Esophagus muscularis mucosa (tissue), 4 donors: ENCODE measurements at regions of chr3 and their contacts with region 1.

Region 1: GRCh38 chr3:15562560-15562959 is 38.8 kb downstream of the HACL1 start:
- DNase-seq: no peak
- H3K4me3 ChIP-seq: no peak overlapping the region
- H3K27ac ChIP-seq: no peak overlapping the region
- H3K4me1 ChIP-seq: peaks cover 0 to 3% (median 0%) of the 10 kb centered on the region in 4 donors
- H3K27me3 ChIP-seq: no peaks in the 10 kb centered on the region
- CTCF ChIP-seq: no peak
- EP300 ChIP-seq: no peak
- POLR2A ChIP-seq: no peak

Region 2: GRCh38 chr3:15241341-15241740 is 321.2 kb before region 1 on chr3:
- intact Hi-C with region 1: loop called (anchors 10 kb)
- DNase-seq: no peak
- H3K4me3 ChIP-seq: no peak overlapping the region
- H3K27ac ChIP-seq: no peak overlapping the region
- H3K4me1 ChIP-seq: no peaks in the 10 kb centered on the region
- H3K27me3 ChIP-seq: no peaks in the 10 kb centered on the region
- CTCF ChIP-seq: peak in 2 of 3 experiments; percentile 11 to 14
- EP300 ChIP-seq: no peak
- POLR2A ChIP-seq: no peak

Region 3: DNA sequence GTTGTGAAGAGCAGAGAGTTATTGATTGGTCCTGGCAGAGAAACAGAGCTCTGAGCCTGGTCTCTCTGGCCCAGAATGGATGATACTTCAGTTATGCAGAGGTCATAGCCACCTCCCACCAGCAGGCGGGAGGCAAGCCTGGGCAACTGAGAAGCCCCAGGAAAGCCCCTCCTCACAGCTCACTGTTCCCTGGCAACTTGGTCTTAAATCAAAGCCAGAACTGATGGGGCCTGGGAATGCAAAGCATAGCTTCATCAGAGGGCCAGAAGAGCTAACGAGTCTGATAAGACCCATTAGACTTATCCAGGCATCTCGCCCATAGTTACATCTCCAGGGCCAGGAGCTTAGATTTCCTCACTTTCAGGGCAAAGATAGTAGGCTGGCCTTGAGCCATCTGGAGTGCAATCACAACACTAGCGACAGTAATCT is 35.5 kb before region 1 on chr3:
- intact Hi-C with region 1: no loop called
- DNase-seq: no peak
- H3K4me3 ChIP-seq: no peak overlapping the region
- H3K27ac ChIP-seq: no peak overlapping the region
- H3K4me1 ChIP-seq: peaks cover 0 to 1% (median under 1%) of the 10 kb centered on the region in 4 donors
- H3K27me3 ChIP-seq: no peaks in the 10 kb centered on the region
- CTCF ChIP-seq: no peak
- EP300 ChIP-seq: no peak
- POLR2A ChIP-seq: no peak

Region 4: GRCh38 chr3:15602146-15602536 is 39.6 kb after region 1 on chr3:
- intact Hi-C with region 1: no loop called
- DNase-seq: no peak
- H3K4me3 ChIP-seq: peak overlapping the region; percentile 78 to 95 (median 78)
- H3K27ac ChIP-seq: peak overlapping the region; percentile 87 to 92 (median 88)
- H3K4me1 ChIP-seq: peaks cover 22 to 60% (median 49%) of the 10 kb centered on the region in 4 donors
- H3K27me3 ChIP-seq: no peaks in the 10 kb centered on the region
- CTCF ChIP-seq: no peak
- EP300 ChIP-seq: no peak
- POLR2A ChIP-seq: no peak

Region 5: DNA sequence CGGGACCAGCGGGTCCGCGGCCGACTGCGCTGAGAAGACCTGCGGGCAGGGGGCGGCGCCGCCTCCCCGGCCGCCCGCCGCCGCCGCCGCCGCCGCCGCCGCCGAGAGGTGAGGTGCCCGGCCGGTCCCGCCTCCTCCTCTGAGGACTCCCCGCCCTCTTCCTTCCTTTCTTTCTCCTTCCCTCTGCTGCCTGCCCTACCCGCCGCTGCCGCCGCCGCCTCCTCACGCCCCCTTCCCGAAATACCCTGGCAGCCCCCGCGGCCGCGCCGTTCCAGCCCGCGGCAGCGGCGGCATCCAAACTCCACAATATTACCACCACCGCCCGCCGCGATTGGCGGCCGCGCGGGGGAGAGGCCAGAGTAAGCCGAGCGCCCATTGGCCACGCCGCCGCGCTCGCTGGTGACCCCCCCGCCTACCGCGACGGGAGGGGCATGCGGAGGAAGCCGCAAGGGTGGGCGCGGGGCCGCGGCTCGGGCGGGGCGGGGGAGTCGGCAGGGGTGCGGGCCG is 297.0 kb after region 1 on chr3:
- intact Hi-C with region 1: no loop called
- DNase-seq: no peak
- H3K4me3 ChIP-seq: peak overlapping the region; percentile 75 to 99 (median 95)
- H3K27ac ChIP-seq: peak overlapping the region; percentile 76 to 86 (median 78)
- H3K4me1 ChIP-seq: peaks cover 9 to 30% (median 24%) of the 10 kb centered on the region in 4 donors
- H3K27me3 ChIP-seq: no peaks in the 10 kb centered on the region
- CTCF ChIP-seq: no peak
- EP300 ChIP-seq: no peak
- POLR2A ChIP-seq: no peak

Region 6: DNA sequence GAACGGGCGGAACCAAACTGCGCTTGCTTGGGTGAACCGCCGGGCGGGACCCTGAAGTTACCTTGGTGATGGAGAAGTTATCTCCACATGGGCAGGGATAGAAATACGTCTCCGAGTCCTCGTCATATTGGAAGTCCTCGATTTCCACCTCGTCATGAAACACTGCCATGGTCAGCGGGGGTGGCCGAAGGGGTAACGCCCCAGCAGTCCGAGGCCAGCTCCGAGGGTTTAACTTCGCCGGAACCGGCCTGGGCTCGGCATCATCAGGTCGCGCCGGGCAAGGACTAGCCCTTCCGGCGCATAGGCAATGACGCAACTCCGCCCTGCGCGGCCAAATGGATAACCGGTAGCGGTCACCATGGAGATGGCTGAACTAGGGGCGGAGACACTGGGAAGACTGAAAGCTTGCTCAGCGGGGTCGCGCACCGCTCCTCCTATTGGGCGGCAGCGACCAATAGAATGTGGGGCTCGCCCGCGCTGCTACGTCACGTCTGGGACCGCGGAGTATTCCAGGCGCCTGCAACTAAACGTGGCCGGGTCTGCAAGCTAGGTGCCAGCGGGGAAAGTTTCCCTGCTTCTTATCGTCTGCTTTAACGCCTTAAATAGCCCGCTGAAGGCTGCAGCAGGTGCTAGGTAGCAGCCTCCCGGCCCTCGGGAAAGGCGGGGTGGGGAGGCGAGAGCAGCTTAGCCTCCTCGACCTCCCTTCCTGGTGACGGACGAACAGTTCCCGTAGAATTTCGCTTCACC is 702.3 kb after region 1 on chr3 and contains the starts of genes DPH3 and OXNAD1:
- intact Hi-C with region 1: no loop called
- DNase-seq: peak; percentile 100
- H3K4me3 ChIP-seq: peak within 1 kb of the TSS; percentile 74 to 97 (median 86)
- H3K27ac ChIP-seq: peak within 1 kb of the TSS; percentile 93 to 94 (median 93)
- H3K4me1 ChIP-seq: peaks cover 38 to 67% (median 62%) of the 10 kb centered on the region in 4 donors
- H3K27me3 ChIP-seq: no peaks in the 10 kb centered on the region
- CTCF ChIP-seq: peak in 2 of 3 experiments; percentile 22 to 33
- EP300 ChIP-seq: no peak
- POLR2A ChIP-seq: peak; percentile 60
- total RNA-seq, gene DPH3: 27.2 to 50.7 (median 37.6) TPM
- total RNA-seq, gene OXNAD1: 6.7 to 13.3 (median 10.2) TPM